ENCODE measurements at regions of chr15 and their contacts with region 1.

Region 1: GRCh38 chr15:90352109-90352893 is at the start of gene ZNF774:
- DNase-seq: peak; percentile 94
- ATAC-seq: peak; percentile 99
- H3K4me3 Mint-ChIP-seq: peak within 1 kb of the TSS; percentile 83
- H3K27ac Mint-ChIP-seq: peak within 1 kb of the TSS; percentile 87
- H3K4me1 Mint-ChIP-seq: peaks cover 7% of the 10 kb centered on the region
- H3K27me3 Mint-ChIP-seq: no peaks in the 10 kb centered on the region
- total RNA-seq, gene ZNF774: 1.5 to 2.0 TPM

Region 2: GRCh38 chr15:89937364-89938350 is 414.6 kb before region 1 on chr15:
- CTCF ChIA-PET with region 1: no interaction called
- POLR2A ChIA-PET with region 1: no interaction called
- intact Hi-C with region 1: no loop called
- DNase-seq: no peak
- ATAC-seq: peak; percentile 17
- H3K4me3 Mint-ChIP-seq: no peak overlapping the region
- H3K27ac Mint-ChIP-seq: no peak overlapping the region
- H3K4me1 Mint-ChIP-seq: peaks cover 20% of the 10 kb centered on the region
- H3K27me3 Mint-ChIP-seq: no peaks in the 10 kb centered on the region

Region 3: DNA sequence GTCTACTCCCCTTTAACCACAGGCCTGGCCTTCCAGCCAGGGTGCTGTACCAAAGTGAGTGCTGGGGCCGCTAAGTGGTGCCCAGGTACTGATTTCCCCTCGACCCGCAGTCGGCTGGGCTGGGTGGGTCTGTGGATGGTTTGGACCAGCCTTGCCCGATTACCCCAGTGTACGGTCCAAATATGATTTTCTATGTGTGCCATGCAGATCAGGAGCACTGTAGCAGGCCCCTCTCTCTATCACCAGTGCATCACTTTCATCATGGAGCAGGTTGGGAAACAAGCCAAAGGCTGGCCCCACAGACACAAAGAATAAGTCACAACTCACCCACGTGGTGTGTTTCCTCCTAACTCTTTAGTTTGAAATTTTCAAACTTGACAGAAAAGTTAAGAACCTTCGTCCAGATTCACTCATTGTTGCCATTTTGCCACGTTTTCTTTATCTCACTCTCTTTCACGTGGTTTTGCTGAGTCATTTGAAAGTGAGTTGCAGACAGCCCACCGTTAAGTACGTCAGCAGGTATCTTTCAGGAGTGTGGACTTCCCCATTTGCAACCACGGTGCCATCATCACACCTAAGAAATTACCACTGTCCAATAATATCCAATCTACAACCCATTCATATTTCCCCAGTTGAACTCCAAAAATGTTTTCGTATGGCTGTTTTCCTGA is 314.2 kb before region 1 on chr15:
- CTCF ChIA-PET with region 1: no interaction called
- POLR2A ChIA-PET with region 1: no interaction called
- intact Hi-C with region 1: no loop called
- DNase-seq: peak; percentile 82
- ATAC-seq: peak; percentile 82
- H3K4me3 Mint-ChIP-seq: peak overlapping the region; percentile 6
- H3K27ac Mint-ChIP-seq: peak overlapping the region; percentile 95
- H3K4me1 Mint-ChIP-seq: peaks cover 79% of the 10 kb centered on the region
- H3K27me3 Mint-ChIP-seq: no peaks in the 10 kb centered on the region

Region 4: GRCh38 chr15:90165659-90166421 is 186.5 kb before region 1 on chr15:
- CTCF ChIA-PET with region 1: no interaction called
- POLR2A ChIA-PET with region 1: no interaction called
- intact Hi-C with region 1: no loop called
- DNase-seq: peak; percentile 81
- ATAC-seq: peak; percentile 97
- H3K4me3 Mint-ChIP-seq: no peak overlapping the region
- H3K27ac Mint-ChIP-seq: peak overlapping the region; percentile 74
- H3K4me1 Mint-ChIP-seq: peaks cover 18% of the 10 kb centered on the region
- H3K27me3 Mint-ChIP-seq: peaks cover 6% of the 10 kb centered on the region

Region 5: GRCh38 chr15:90265271-90266060 is 86.8 kb before region 1 on chr15 and contains the start of gene NGRN:
- CTCF ChIA-PET with region 1: no interaction called
- POLR2A ChIA-PET with region 1: no interaction called
- intact Hi-C with region 1: loop called in 1 of 2 experiments (anchors 1 kb)
- DNase-seq: peak; percentile 95
- ATAC-seq: peak; percentile 87
- H3K4me3 Mint-ChIP-seq: peak within 1 kb of the TSS; percentile 98
- H3K27ac Mint-ChIP-seq: peak within 1 kb of the TSS; percentile 99
- H3K4me1 Mint-ChIP-seq: peaks cover 37% of the 10 kb centered on the region
- H3K27me3 Mint-ChIP-seq: no peaks in the 10 kb centered on the region
- total RNA-seq, gene NGRN: 22.0 to 23.9 TPM